ENCODE measurements at regions of chr1 and their contacts with region 1.

Region 1: DNA sequence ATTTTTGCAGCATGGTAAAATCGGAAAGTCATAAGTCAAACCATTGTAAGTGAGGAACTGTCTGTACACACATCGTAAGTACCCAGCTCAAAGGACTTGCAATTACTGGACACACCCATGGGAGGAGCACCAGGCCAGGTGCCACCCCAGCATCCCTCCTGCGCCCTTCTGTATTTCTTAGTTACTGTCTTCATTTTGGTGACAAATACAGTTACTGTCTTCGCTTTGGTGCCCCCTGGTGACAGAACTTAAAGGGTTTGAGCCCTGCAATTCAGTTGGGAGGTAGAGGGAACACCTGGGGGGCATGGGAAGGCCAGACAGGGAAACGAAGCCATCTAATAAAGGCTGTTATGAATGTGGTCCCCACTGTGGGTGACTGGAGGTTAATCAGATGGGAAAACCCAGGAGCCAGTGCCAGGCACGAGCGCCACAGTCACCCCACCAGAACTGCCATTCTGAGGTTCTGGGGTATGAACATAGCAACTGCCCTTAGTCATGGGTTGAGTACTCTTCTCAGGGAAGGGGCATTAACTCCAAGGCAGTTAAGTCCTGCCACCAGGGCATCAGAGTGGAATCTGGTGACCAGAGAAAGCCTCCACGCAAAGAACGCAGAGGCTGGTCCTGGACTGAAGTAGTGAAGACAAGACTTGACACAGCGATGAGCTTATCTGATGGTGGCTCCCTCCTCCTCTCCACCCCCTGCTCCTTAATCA is 612.9 kb downstream of the PTPRU start:
- DNase-seq: peak in 4 of 9 donors; percentile 9 to 45 (median 13)
- ATAC-seq: peak; percentile 52
- H3K4me3 ChIP-seq: no peak overlapping the region
- H3K4me3 Mint-ChIP-seq: no peak overlapping the region
- H3K27ac ChIP-seq: no peak overlapping the region
- H3K27ac Mint-ChIP-seq: no peak overlapping the region
- H3K4me1 ChIP-seq: no peaks in the 10 kb centered on the region
- H3K4me1 Mint-ChIP-seq: peaks cover 0 to 3% (median 0%) of the 10 kb centered on the region in 7 donors
- H3K27me3 ChIP-seq: no peaks in the 10 kb centered on the region
- H3K27me3 Mint-ChIP-seq: peaks cover 3 to 32% (median 26%) of the 10 kb centered on the region in 5 donors

Region 2: GRCh38 chr1:29708901-29709710 is 140.1 kb before region 1 on chr1:
- CTCF ChIA-PET with region 1: no interaction called
- POLR2A ChIA-PET with region 1: no interaction called
- intact Hi-C with region 1: loop called in 1 of 2 experiments (anchors 2 kb)
- DNase-seq: no peak
- ATAC-seq: no peak
- H3K4me3 ChIP-seq: no peak overlapping the region
- H3K4me3 Mint-ChIP-seq: peak overlapping the region in 1 of 10 donors; percentile 54
- H3K27ac ChIP-seq: no peak overlapping the region
- H3K27ac Mint-ChIP-seq: peak overlapping the region in 1 of 9 donors; percentile 90
- H3K4me1 ChIP-seq: no peaks in the 10 kb centered on the region
- H3K4me1 Mint-ChIP-seq: peaks cover 0 to 59% (median 0%) of the 10 kb centered on the region in 7 donors
- H3K27me3 ChIP-seq: no peaks in the 10 kb centered on the region
- H3K27me3 Mint-ChIP-seq: peaks cover 16 to 55% (median 50%) of the 10 kb centered on the region in 5 donors

Region 3: DNA sequence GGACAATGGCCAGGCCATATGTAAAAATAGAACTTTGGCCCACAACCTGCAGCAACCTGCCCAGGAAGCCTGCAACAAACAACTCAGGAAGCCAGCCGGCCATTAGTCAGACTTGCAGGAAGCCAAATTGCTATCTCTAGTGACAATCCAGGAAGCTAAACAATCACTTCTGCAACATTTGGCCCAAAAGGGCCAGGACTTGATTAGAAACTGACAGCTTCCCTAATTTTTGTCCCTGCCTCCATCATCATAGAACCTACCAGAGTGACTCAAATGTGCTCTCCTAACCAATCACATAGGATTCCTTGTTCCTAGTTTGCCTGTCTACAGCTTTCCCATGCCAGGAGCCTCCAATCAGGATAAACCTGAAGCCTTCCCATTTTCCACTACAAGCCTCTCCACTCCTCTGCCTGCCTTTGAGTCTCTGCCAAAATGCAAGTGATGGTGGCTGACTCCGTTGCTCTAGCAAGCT is 26.4 kb after region 1 on chr1:
- CTCF ChIA-PET with region 1: no interaction called
- POLR2A ChIA-PET with region 1: no interaction called
- intact Hi-C with region 1: no loop called
- DNase-seq: no peak
- ATAC-seq: no peak
- H3K4me3 ChIP-seq: no peak overlapping the region
- H3K4me3 Mint-ChIP-seq: no peak overlapping the region
- H3K27ac ChIP-seq: no peak overlapping the region
- H3K27ac Mint-ChIP-seq: no peak overlapping the region
- H3K4me1 ChIP-seq: no peaks in the 10 kb centered on the region
- H3K4me1 Mint-ChIP-seq: no peaks in the 10 kb centered on the region
- H3K27me3 ChIP-seq: no peaks in the 10 kb centered on the region
- H3K27me3 Mint-ChIP-seq: peaks cover 2 to 34% (median 24%) of the 10 kb centered on the region in 5 donors

Region 4: DNA sequence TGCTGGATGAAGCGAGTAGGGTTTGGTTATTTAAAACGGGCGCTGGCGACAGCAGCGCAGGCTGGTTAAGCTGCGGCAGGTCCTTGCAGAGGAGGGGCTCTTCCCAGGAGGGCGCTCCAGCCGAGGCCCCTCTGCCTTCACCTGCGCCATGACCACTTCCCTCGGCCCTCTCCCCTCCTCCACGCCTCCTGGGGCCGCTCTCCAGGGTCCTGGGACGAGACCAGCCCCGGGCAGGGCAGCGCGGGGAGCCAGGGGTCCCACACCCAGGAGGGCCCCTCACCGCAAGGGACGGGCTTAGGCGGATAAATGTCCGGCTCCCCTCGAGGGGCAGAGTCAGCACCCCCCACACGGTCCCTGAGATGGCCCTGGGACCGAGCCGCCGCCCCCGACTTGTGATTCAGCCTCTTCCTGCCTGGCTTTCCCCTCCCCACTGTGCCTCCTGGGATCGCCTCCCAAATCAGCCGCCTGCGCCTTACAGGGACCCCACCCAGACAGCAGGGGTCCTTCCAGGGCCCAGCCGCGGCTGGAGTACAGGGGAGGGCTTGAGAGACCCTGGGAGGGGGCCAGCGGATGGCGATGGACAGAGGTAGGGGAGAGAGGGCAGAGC is 493.4 kb after region 1 on chr1:
- CTCF ChIA-PET with region 1: no interaction called
- POLR2A ChIA-PET with region 1: no interaction called
- intact Hi-C with region 1: no loop called
- DNase-seq: no peak
- ATAC-seq: no peak
- H3K4me3 ChIP-seq: no peak overlapping the region
- H3K4me3 Mint-ChIP-seq: no peak overlapping the region
- H3K27ac ChIP-seq: no peak overlapping the region
- H3K27ac Mint-ChIP-seq: no peak overlapping the region
- H3K4me1 ChIP-seq: no peaks in the 10 kb centered on the region
- H3K4me1 Mint-ChIP-seq: no peaks in the 10 kb centered on the region
- H3K27me3 ChIP-seq: no peaks in the 10 kb centered on the region
- H3K27me3 Mint-ChIP-seq: peaks cover 23 to 36% (median 34%) of the 10 kb centered on the region in 5 donors

Measured in naive thymus-derived CD4-positive, alpha-beta T cell (primary cell).